ENCODE measurements at regions of chr4 and their contacts with region 1.

Region 1: GRCh38 chr4:16532240-16532970 is 306.1 kb upstream of the TAPT1 start:
- DNase-seq: peak; percentile 33
- H3K4me3 ChIP-seq: no peak overlapping the region
- H3K27ac ChIP-seq: no peak overlapping the region
- H3K4me1 ChIP-seq: peaks cover 15% of the 10 kb centered on the region
- H3K27me3 ChIP-seq: no peaks in the 10 kb centered on the region
- CTCF ChIP-seq: no peak

Region 2: GRCh38 chr4:16237715-16238114 is 294.7 kb before region 1 on chr4:
- CTCF ChIA-PET with region 1: no interaction called
- POLR2A ChIA-PET with region 1: no interaction called
- intact Hi-C with region 1: no loop called
- DNase-seq: no peak
- H3K4me3 ChIP-seq: no peak overlapping the region
- H3K27ac ChIP-seq: no peak overlapping the region
- H3K4me1 ChIP-seq: peaks cover 23% of the 10 kb centered on the region
- H3K27me3 ChIP-seq: no peaks in the 10 kb centered on the region
- CTCF ChIP-seq: no peak

Region 3: GRCh38 chr4:16608123-16608522 is 75.7 kb after region 1 on chr4:
- CTCF ChIA-PET with region 1: no interaction called
- POLR2A ChIA-PET with region 1: no interaction called
- intact Hi-C with region 1: no loop called
- DNase-seq: no peak
- H3K4me3 ChIP-seq: no peak overlapping the region
- H3K27ac ChIP-seq: no peak overlapping the region
- H3K4me1 ChIP-seq: peaks cover 11% of the 10 kb centered on the region
- H3K27me3 ChIP-seq: no peaks in the 10 kb centered on the region
- CTCF ChIP-seq: no peak

Region 4: GRCh38 chr4:17614416-17615299 is 1082.3 kb after region 1 on chr4 and contains the start of gene MED28:
- CTCF ChIA-PET with region 1: no interaction called
- POLR2A ChIA-PET with region 1: interaction called, 11 read pairs
- intact Hi-C with region 1: no loop called
- DNase-seq: peak; percentile 97
- H3K4me3 ChIP-seq: peak within 1 kb of the TSS; percentile 77
- H3K27ac ChIP-seq: peak within 1 kb of the TSS; percentile 86
- H3K4me1 ChIP-seq: peaks cover 10% of the 10 kb centered on the region
- H3K27me3 ChIP-seq: no peaks in the 10 kb centered on the region
- CTCF ChIP-seq: no peak
- total RNA-seq, gene MED28: 46.6 and 48.8 TPM in 2 replicates

Measured in A673 (cell line).